ENCODE measurements at regions of chr6 and their contacts with region 1.

Region 1: GRCh38 chr6:163398815-163399214 is 15.7 kb upstream of the QKI start:
- DNase-seq: no peak

Region 2: DNA sequence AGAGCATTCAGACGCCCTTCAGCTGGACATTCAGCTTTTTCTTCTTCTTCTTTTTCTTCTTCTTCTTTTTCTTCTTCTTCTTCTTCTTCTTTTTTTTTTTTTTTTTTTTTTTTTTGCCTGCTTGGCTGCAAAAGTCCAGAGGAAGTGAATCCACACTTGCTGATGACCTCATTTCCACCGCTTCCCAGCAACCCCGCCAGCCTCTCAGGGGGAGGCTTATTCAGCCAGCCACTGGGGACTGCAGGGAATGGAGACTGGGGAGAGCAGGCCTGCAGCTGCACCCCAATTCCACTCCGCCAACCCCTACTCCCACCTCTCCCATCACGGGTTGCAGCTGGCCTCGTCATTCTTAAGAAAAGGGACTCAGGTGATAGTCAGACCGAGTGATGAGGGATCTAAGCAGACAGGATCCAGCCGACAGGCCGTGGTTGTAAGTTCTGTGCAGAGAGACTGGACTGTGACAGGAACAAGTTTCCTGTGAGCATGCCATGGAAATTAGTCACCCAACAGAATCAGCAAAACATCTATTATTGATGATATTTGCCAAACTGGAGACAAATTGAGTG is 43.3 kb before region 1 on chr6:
- intact Hi-C with region 1: loop called (anchors 5 kb)
- DNase-seq: peak; percentile 88

Region 3: GRCh38 chr6:163366288-163366687 is 32.5 kb before region 1 on chr6:
- intact Hi-C with region 1: no loop called
- DNase-seq: no peak

Region 4: GRCh38 chr6:163485388-163485851 is 86.6 kb after region 1 on chr6:
- intact Hi-C with region 1: no loop called
- DNase-seq: no peak

Measured in cardiac septum (tissue), 1 donor.